A549 (cell line): ENCODE measurements at regions of chr16 and their contacts with region 1.

Region 1: GRCh38 chr16:27690608-27691007 is 140.7 kb downstream of the KATNIP start:
- DNase-seq: peak in 1 of 2 experiments; percentile 31
- ATAC-seq: peak; percentile 43 to 81; a peak in 4 of 6 replicates
- H3K4me3 ChIP-seq: no peak overlapping the region
- H3K27ac ChIP-seq: no peak overlapping the region
- H3K4me1 ChIP-seq: no peaks in the 10 kb centered on the region
- CTCF ChIP-seq: peak; percentile 42
- EP300 ChIP-seq: no peak
- POLR2A ChIP-seq: no peak
- RAD21 ChIP-seq: peak; percentile 30 to 58; a peak in 3 of 5 replicates

Region 2: GRCh38 chr16:27475561-27475960 is 215.0 kb before region 1 on chr16:
- CTCF ChIA-PET with region 1: no interaction called
- POLR2A ChIA-PET with region 1: no interaction called
- DNase-seq: no peak
- ATAC-seq: no peak
- H3K4me3 ChIP-seq: no peak overlapping the region
- H3K27ac ChIP-seq: no peak overlapping the region
- H3K4me1 ChIP-seq: no peaks in the 10 kb centered on the region
- CTCF ChIP-seq: no peak
- EP300 ChIP-seq: no peak
- POLR2A ChIP-seq: no peak
- RAD21 ChIP-seq: no peak

Region 3: GRCh38 chr16:27703545-27703944 is 12.9 kb after region 1 on chr16:
- CTCF ChIA-PET with region 1: interaction called, 11 read pairs
- POLR2A ChIA-PET with region 1: no interaction called
- DNase-seq: no peak
- ATAC-seq: no peak
- H3K4me3 ChIP-seq: no peak overlapping the region
- H3K27ac ChIP-seq: no peak overlapping the region
- H3K4me1 ChIP-seq: no peaks in the 10 kb centered on the region
- CTCF ChIP-seq: no peak
- EP300 ChIP-seq: no peak
- POLR2A ChIP-seq: no peak
- RAD21 ChIP-seq: no peak

Region 4: DNA sequence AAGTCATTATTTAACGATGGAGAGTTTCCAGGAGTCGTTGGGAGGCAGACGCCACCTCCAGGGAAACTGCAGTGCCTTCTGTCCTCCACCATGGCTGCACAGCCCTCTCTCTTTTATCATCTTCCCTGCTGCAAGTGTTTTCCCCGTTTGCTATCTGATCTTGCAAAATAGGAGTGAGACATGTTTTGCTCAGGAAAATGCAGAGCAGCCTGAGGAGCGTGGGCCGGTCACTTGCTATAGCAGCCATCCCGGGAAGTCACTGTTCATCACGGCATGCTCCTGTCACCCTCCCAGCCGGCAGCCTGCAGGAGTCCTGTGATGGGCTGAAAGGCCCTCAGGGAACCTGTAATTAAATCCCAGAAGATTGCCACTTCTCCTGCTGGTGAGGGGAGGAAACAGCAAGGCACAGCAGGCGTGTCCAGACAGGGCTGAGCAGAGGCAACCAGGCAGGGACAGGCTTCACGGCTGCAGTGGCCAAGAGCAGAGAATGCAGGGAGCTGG is 229.8 kb after region 1 on chr16:
- CTCF ChIA-PET with region 1: no interaction called
- POLR2A ChIA-PET with region 1: no interaction called
- DNase-seq: peak; percentile 20 to 38
- ATAC-seq: peak; percentile 86 to 95
- H3K4me3 ChIP-seq: no peak overlapping the region
- H3K27ac ChIP-seq: no peak overlapping the region
- H3K4me1 ChIP-seq: no peaks in the 10 kb centered on the region
- CTCF ChIP-seq: no peak
- EP300 ChIP-seq: no peak
- POLR2A ChIP-seq: no peak
- RAD21 ChIP-seq: no peak